Activated B cell treated with CpG ODN at 0.5 μM for 24 hours (primary cell): ENCODE measurements at regions of chr15 and their contacts with region 1.

Region 1: DNA sequence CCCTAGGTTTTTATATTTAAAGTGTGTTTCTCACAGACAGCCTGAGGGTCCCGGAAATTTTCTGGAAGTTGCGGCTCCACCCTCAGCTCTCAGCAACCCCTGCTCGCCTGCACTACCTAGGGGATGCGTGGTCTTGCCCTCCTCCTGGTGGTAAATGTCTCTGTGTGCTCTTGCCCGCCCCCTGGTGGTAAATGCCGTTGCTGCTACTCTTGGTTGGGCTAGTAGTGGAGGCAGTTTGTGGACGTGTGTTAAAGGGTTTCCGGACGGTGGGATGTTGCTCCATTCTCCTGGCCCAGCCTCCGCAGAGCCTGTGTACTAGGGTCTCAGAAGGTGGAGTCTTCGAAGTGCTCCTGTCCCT is 27.4 kb downstream of the STOML1 start:
- DNase-seq: peak; percentile 78
- ATAC-seq: peak; percentile 92
- H3K4me3 Mint-ChIP-seq: peak overlapping the region; percentile 76
- H3K27ac Mint-ChIP-seq: no peak overlapping the region
- H3K4me1 Mint-ChIP-seq: peaks cover 23% of the 10 kb centered on the region
- H3K27me3 Mint-ChIP-seq: peaks cover 5% of the 10 kb centered on the region
- CTCF ChIP-seq: peak; percentile 48

Region 2: GRCh38 chr15:73873889-73874511 is 90.7 kb before region 1 on chr15:
- CTCF ChIA-PET with region 1: interaction called, 4 read pairs
- POLR2A ChIA-PET with region 1: no interaction called
- intact Hi-C with region 1: loop called (anchors 1 kb)
- DNase-seq: no peak
- ATAC-seq: no peak
- H3K4me3 Mint-ChIP-seq: no peak overlapping the region
- H3K27ac Mint-ChIP-seq: no peak overlapping the region
- H3K4me1 Mint-ChIP-seq: no peaks in the 10 kb centered on the region
- H3K27me3 Mint-ChIP-seq: peaks cover 35% of the 10 kb centered on the region
- CTCF ChIP-seq: no peak

Region 3: DNA sequence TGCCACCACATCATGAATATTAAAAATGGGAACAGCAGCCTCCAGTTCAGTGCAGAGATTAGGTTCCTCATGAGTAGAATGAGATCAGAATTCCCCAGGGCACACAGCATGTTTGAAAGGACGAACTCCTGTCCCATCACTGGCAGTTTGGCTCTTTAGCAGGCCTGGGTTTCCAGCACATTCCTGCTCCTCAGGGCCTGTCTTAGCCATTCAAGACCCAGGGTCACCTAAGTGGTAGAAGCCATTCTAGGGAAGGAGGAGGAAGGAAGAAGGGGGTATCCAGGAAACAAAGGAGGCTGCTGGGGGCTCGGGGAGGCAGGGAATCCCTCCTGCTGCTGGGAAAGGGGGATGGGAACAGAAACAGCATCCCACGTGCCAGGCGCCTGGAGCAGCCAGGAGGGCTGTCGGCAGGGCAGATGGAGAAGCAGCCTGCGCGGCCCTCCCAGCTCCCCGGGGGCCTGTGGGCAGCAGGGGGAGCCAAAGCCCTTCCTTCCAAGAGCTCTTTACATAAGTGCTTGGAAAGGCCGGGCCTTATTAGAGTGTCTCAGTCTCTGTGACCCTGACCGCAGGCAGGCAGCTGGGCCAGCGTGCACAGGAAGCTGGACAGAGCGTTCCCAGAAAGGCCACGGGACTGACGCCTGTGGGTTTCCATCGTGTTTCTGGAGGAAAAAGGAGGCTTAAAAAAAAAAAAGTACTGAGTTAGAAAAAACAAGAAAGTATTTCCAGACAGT is 13.7 kb before region 1 on chr15:
- CTCF ChIA-PET with region 1: interaction called, 18 read pairs
- POLR2A ChIA-PET with region 1: no interaction called
- intact Hi-C with region 1: loop called (anchors 1 kb)
- DNase-seq: peak; percentile 45
- ATAC-seq: peak; percentile 62
- H3K4me3 Mint-ChIP-seq: no peak overlapping the region
- H3K27ac Mint-ChIP-seq: no peak overlapping the region
- H3K4me1 Mint-ChIP-seq: peaks cover 11% of the 10 kb centered on the region
- H3K27me3 Mint-ChIP-seq: peaks cover 2% of the 10 kb centered on the region
- CTCF ChIP-seq: no peak